Activated T-helper 2 cell treated with anti-CD3 and anti-CD28 coated beads, Interferon-gamma antibody, Interleukin-2, Interleukin-4, amounts not matched to agents 10 μg/mL and 5 μg/mL and 100 μg/mL, durations not matched to agents 14 hours and 24 hours and 36 hours (primary cell): ENCODE measurements at regions of chr2 and their contacts with region 1.

Region 1: GRCh38 chr2:239303711-239304532 is 96.9 kb downstream of the HDAC4 start:
- DNase-seq: no peak
- H3K4me3 Mint-ChIP-seq: no peak overlapping the region
- H3K27ac Mint-ChIP-seq: no peak overlapping the region
- H3K4me1 Mint-ChIP-seq: peaks cover 38% of the 10 kb centered on the region
- H3K27me3 Mint-ChIP-seq: no peaks in the 10 kb centered on the region

Region 2: DNA sequence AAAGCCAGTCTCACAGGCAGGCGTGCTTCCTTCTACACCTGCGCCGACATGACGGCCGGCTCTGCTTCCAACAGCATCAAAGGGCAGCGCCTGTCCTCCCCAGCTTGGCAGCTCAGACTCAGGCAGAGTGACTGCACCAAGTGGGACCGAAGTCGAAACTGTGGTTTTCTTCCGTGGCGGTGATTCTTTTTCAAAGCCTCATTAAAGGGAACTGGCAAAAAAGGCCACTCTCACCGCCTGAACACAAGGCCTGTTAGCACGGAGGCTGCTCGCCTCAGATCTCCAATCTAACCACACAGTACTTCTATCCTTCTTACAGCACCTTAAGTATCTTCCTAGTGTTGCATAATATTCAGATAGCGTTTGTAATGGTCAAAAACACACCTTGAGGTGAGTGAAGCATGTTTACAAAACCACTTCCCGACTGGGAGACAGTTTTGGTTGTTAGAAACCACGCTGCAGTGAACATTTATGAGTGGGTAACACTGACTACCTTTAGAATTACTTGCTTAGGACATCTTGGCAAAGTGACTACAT is 139.5 kb before region 1 on chr2:
- intact Hi-C with region 1: no loop called
- DNase-seq: peak; percentile 14
- H3K4me3 Mint-ChIP-seq: no peak overlapping the region
- H3K27ac Mint-ChIP-seq: no peak overlapping the region
- H3K4me1 Mint-ChIP-seq: peaks cover 11% of the 10 kb centered on the region
- H3K27me3 Mint-ChIP-seq: no peaks in the 10 kb centered on the region

Region 3: GRCh38 chr2:239275044-239275685 is 28.8 kb before region 1 on chr2:
- intact Hi-C with region 1: no loop called
- DNase-seq: peak; percentile 81
- H3K4me3 Mint-ChIP-seq: peak overlapping the region; percentile 58
- H3K27ac Mint-ChIP-seq: peak overlapping the region; percentile 86
- H3K4me1 Mint-ChIP-seq: peaks cover 69% of the 10 kb centered on the region
- H3K27me3 Mint-ChIP-seq: peaks cover 2% of the 10 kb centered on the region

Region 4: GRCh38 chr2:239318790-239319661 is 15.1 kb after region 1 on chr2:
- intact Hi-C with region 1: loop called (anchors 2 kb)
- DNase-seq: no peak
- H3K4me3 Mint-ChIP-seq: peak overlapping the region; percentile 81
- H3K27ac Mint-ChIP-seq: peak overlapping the region; percentile 86
- H3K4me1 Mint-ChIP-seq: peaks cover 70% of the 10 kb centered on the region
- H3K27me3 Mint-ChIP-seq: no peaks in the 10 kb centered on the region